GM12878 (cell line): ENCODE measurements at regions of chr4 and their contacts with region 1.

Region 1: GRCh38 chr4:6180841-6181631 is 19.3 kb downstream of the JAKMIP1 start:
- DNase-seq: peak; percentile 98
- ATAC-seq: peak; percentile 88
- H3K4me3 ChIP-seq: no peak overlapping the region
- H3K27ac ChIP-seq: peak overlapping the region; percentile 94
- H3K4me1 ChIP-seq: peaks cover 67% of the 10 kb centered on the region
- H3K27me3 ChIP-seq: no peaks in the 10 kb centered on the region
- CTCF ChIP-seq: no peak
- EP300 ChIP-seq: peak; percentile 100
- POLR2A ChIP-seq: peak; percentile 81
- RAD21 ChIP-seq: peak; percentile 18; the same call in 1 of the 2 replicates

Region 2: GRCh38 chr4:5572114-5572513 is 608.9 kb before region 1 on chr4:
- CTCF ChIA-PET with region 1: no interaction called
- POLR2A ChIA-PET with region 1: no interaction called
- RAD21 ChIA-PET with region 1: no interaction called
- SMC1A ChIA-PET with region 1: no interaction called
- in situ Hi-C with region 1: no loop called
- intact Hi-C with region 1: no loop called
- DNase-seq: no peak
- ATAC-seq: no peak
- H3K4me3 ChIP-seq: no peak overlapping the region
- H3K27ac ChIP-seq: no peak overlapping the region
- H3K4me1 ChIP-seq: no peaks in the 10 kb centered on the region
- H3K27me3 ChIP-seq: no peaks in the 10 kb centered on the region
- CTCF ChIP-seq: no peak
- EP300 ChIP-seq: no peak
- POLR2A ChIP-seq: no peak
- RAD21 ChIP-seq: no peak

Region 3: DNA sequence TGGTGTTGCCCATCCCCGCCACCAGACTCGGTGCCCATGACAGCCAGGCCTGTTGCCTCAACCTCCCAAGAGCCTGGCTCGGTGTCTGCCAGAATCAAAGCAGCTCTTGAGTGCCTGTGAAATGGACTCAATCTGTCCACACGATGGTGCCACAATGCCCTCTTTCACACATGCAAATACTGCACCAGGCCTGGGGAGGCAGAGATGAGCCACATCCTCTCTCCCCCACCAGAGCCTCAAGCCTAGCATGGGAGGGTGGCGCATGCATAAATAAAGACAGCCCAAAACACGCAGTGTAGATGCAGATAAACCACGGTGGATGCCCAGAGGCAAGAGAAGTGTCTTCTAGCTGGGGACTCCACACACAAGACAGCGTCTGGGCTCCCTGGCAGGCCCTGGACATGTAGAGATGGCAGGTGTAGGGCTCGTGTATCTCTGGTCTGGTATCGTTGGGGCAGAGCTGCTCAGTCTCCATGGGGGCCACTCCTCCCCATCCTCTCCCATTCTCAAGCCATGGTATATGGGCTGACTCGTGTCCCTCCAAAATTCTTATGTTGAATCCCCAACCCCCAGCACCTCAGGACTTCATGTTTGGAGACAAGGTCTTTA is 46.3 kb before region 1 on chr4:
- CTCF ChIA-PET with region 1: interaction called, 12 read pairs
- POLR2A ChIA-PET with region 1: interaction called, 3 read pairs
- RAD21 ChIA-PET with region 1: interaction called, 8 read pairs
- SMC1A ChIA-PET with region 1: interaction called, 10 read pairs
- in situ Hi-C with region 1: no loop called
- intact Hi-C with region 1: loop called (anchors 1 kb)
- DNase-seq: peak; percentile 51
- ATAC-seq: peak; percentile 99
- H3K4me3 ChIP-seq: no peak overlapping the region
- H3K27ac ChIP-seq: no peak overlapping the region
- H3K4me1 ChIP-seq: peaks cover 7% of the 10 kb centered on the region; the same call in 1 of the 2 replicates
- H3K27me3 ChIP-seq: no peaks in the 10 kb centered on the region
- CTCF ChIP-seq: peak; percentile 72 to 96 (median 73)
- EP300 ChIP-seq: no peak
- POLR2A ChIP-seq: no peak
- RAD21 ChIP-seq: peak; percentile 78

Region 4: DNA sequence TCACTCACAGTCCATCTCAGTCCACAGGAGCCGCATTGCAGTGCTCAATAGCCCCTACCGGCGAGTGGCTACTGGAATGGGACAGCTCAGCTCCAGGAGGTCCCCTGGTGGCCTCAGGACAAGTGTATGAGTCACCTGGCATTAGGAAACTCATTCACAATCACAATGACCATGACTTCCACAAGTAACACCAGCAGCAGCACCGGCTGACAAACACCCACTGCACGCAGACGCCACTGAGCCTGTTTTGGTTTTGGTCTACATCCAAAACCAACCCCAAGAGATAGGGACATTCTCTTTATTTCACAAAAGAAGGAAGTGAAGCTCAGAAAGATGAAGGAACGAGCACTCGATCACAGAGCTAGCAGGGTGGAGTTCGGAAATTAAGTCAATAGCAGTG is 11.2 kb after region 1 on chr4:
- CTCF ChIA-PET with region 1: interaction called, 30 read pairs
- POLR2A ChIA-PET with region 1: interaction called, 28 read pairs
- RAD21 ChIA-PET with region 1: interaction called, 120 read pairs
- SMC1A ChIA-PET with region 1: interaction called, 161 read pairs
- in situ Hi-C with region 1: no loop called
- intact Hi-C with region 1: no loop called
- DNase-seq: no peak
- ATAC-seq: peak; percentile 37
- H3K4me3 ChIP-seq: no peak overlapping the region
- H3K27ac ChIP-seq: peak overlapping the region; percentile 50
- H3K4me1 ChIP-seq: peaks cover 30% of the 10 kb centered on the region
- H3K27me3 ChIP-seq: no peaks in the 10 kb centered on the region
- CTCF ChIP-seq: peak in 1 of 3 experiments; percentile 19; a peak in 1 of 6 replicates
- EP300 ChIP-seq: peak; percentile 39 to 53; a peak in 2 of 4 replicates
- POLR2A ChIP-seq: no peak
- RAD21 ChIP-seq: no peak

Region 5: DNA sequence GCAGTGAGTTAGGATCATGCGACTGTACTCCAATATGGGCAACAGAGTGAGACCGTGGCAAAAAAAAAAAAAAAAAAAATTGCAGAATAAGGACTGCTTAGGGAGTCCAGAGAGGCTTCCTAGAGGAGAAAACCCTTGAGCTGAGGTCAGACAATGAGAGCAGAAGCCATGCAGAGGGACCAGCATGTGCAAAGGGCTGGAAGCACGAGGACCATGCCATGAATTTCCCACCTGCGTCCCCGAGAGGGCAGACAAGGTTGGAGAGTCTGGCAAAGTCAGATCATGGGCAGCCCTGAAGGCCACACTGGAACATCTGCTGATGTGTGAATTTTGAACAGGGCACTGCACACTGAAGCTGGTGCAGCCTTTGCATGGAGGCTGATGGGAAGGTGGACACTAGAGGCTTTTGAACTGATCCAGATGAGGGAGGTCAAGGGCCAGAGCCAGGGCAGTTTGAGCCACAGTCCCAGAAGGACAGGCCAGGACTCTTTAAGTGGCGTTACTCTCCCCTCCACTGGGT is 25.8 kb after region 1 on chr4:
- CTCF ChIA-PET with region 1: interaction called, 3 read pairs
- POLR2A ChIA-PET with region 1: interaction called, 84 read pairs
- RAD21 ChIA-PET with region 1: interaction called, 120 read pairs
- SMC1A ChIA-PET with region 1: interaction called, 161 read pairs
- in situ Hi-C with region 1: no loop called
- intact Hi-C with region 1: no loop called
- DNase-seq: no peak
- ATAC-seq: no peak
- H3K4me3 ChIP-seq: no peak overlapping the region
- H3K27ac ChIP-seq: no peak overlapping the region
- H3K4me1 ChIP-seq: peaks cover 8% of the 10 kb centered on the region; the same call in 1 of the 2 replicates
- H3K27me3 ChIP-seq: no peaks in the 10 kb centered on the region; a peak in 1 of 4 replicates
- CTCF ChIP-seq: no peak
- EP300 ChIP-seq: no peak
- POLR2A ChIP-seq: no peak
- RAD21 ChIP-seq: no peak

Region 6: DNA sequence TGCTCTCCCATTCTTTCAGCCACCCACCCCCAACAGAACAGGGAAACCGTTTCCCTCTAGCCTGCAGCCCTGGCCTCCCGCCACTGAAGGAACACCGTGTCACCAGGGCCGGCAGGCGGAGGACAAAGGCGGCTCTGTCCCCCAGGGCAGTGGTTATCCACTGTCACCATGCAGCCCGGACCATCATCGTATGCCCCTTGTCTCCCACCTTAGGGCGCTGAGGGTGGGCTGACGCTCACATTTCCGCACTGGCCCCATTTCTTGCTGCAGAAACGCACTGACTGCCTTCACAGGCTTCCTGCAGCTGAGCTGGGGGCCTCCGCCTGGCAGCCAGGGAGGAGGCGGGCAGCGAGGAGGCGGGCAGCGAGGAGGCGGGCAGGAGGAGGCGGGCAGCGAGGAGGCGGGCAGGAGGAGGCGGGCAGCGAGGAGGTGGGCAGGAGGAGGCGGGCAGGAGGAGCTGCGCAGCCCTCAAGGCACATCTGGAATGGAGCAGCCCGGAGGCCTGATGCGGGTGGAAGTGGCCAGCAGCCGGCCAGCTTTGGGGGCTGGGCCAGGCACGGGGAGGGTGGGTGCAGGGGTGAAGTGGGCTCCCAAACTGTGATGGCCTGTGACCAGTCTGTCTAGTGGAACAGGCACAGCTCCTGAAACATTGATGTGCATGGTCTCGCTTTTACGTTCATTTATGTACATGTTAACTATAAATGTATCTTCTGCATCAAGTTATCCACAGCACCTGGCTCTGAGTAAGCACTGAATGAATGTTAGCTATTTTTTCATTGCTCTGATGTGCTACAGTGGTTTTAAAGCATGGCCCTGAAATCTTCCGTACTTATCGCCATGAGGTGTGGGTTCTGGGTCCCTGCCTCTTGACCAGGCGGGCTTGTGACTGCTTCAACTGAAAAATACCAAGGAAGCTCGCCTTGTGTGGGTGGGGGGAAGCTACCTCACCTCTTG is 580.9 kb after region 1 on chr4:
- CTCF ChIA-PET with region 1: no interaction called
- POLR2A ChIA-PET with region 1: no interaction called
- RAD21 ChIA-PET with region 1: no interaction called
- SMC1A ChIA-PET with region 1: no interaction called
- in situ Hi-C with region 1: no loop called
- intact Hi-C with region 1: no loop called
- DNase-seq: no peak
- ATAC-seq: no peak
- H3K4me3 ChIP-seq: no peak overlapping the region
- H3K27ac ChIP-seq: no peak overlapping the region
- H3K4me1 ChIP-seq: no peaks in the 10 kb centered on the region
- H3K27me3 ChIP-seq: peaks cover 0 to 2% of the 10 kb centered on the region in 2 experiments; a peak in 1 of 4 replicates
- CTCF ChIP-seq: no peak
- EP300 ChIP-seq: no peak
- POLR2A ChIP-seq: no peak
- RAD21 ChIP-seq: no peak